K562 (cell line): ENCODE measurements at regions of chr12 and their contacts with region 1.

Region 1: DNA sequence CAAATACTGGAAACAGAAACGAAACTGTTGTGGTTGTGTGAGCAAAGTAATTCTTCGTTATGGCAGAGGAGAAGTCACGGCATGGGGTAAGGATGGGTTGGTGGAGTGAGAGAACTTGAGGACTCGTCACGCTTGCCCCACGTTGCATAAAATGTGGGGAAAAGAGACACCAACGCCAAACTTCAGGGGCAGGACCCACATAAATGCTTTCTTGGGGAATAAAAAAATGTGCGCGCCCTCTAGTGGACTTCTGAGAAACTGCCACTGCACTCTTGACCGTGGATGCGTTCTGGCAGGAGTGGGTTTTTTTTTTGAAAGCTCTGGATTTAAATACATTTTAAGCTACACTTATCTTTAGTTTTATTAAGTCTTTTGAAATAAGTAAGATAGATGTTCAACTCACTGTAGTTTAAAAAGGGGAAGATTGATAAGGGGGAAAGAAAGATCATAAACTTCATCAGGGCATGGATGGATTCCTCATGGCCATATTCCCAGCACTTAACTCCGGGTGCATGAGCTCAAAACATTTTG is 4.1 kb upstream of the IGF1 start:
- DNase-seq: peak; percentile 64 to 73 (median 68)
- ATAC-seq: peak; percentile 68
- H3K4me3 ChIP-seq: no peak overlapping the region
- H3K27ac ChIP-seq: no peak overlapping the region
- H3K4me1 ChIP-seq: peaks cover 0 to 7% of the 10 kb centered on the region in 2 experiments; a peak in 3 of 5 replicates
- H3K27me3 ChIP-seq: no peaks in the 10 kb centered on the region
- CTCF ChIP-seq: peak; percentile 68 to 85 (median 82)
- EP300 ChIP-seq: no peak
- POLR2A ChIP-seq: no peak
- RAD21 ChIP-seq: peak; percentile 54 to 71

Region 2: GRCh38 chr12:102300824-102301461 is 183.6 kb before region 1 on chr12:
- CTCF ChIA-PET with region 1: interaction called, 4 read pairs
- POLR2A ChIA-PET with region 1: interaction called, 3 read pairs
- in situ Hi-C with region 1: no loop called
- intact Hi-C with region 1: loop called (anchors 2 kb)
- DNase-seq: peak; percentile 27 to 71 (median 46)
- ATAC-seq: peak; percentile 99
- H3K4me3 ChIP-seq: no peak overlapping the region
- H3K27ac ChIP-seq: no peak overlapping the region
- H3K4me1 ChIP-seq: no peaks in the 10 kb centered on the region
- H3K27me3 ChIP-seq: no peaks in the 10 kb centered on the region
- CTCF ChIP-seq: peak; percentile 56 to 64 (median 59)
- EP300 ChIP-seq: no peak
- POLR2A ChIP-seq: no peak
- RAD21 ChIP-seq: peak; percentile 41 to 88; a peak in 3 of 4 replicates